PC-9 (cell line): ENCODE measurements at regions of chr2 and their contacts with region 1.

Region 1: DNA sequence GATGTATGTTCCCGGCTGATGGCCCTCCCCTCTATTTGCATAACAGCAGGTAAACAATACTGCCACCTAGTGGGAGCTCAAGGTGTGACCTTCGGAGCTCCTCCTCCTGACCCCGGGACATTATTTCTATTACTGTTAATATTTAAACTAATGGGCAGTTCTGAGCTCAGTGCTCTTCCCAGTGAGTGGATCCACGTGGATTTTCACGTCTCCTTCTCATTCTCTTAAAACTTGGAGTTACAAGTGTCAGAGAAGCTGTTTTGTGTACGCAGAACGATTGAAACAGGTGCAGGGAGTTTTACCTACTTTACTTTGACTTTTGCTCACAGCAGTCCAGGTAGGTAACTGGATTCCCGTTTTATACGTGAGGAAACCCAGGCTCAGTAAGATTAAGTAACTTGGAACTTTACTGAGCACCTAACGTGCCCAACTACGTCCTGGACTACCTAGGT is 127.3 kb downstream of the PRKCE start:
- DNase-seq: peak; percentile 67 to 68
- H3K4me3 ChIP-seq: no peak overlapping the region
- H3K27ac ChIP-seq: no peak overlapping the region
- H3K4me1 ChIP-seq: no peaks in the 10 kb centered on the region
- H3K27me3 ChIP-seq: no peaks in the 10 kb centered on the region
- CTCF ChIP-seq: peak; percentile 97

Region 2: DNA sequence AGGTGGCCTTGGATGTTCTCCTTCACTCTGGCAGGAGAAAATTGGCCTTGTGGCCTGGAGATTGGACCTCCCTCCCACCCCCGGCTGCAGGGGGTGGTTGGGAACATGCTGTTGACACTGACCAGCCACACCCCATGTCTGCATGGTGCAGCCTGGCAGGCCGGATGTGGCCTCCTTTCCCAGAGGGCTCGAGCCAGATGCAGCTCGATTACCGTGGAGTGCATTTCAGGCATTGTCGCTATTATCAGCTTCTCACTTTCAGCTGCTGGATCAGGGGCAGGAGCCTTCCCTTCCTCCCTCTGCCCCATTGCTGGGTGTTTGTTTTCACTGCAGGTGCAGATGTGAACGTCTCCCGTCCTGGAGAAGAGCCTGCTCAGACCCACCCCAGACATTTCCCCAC is 558.5 kb before region 1 on chr2:
- CTCF ChIA-PET with region 1: no interaction called
- POLR2A ChIA-PET with region 1: no interaction called
- intact Hi-C with region 1: no loop called
- DNase-seq: peak; percentile 24 to 47
- H3K4me3 ChIP-seq: no peak overlapping the region
- H3K27ac ChIP-seq: no peak overlapping the region
- H3K4me1 ChIP-seq: peaks cover 30% of the 10 kb centered on the region
- H3K27me3 ChIP-seq: no peaks in the 10 kb centered on the region
- CTCF ChIP-seq: no peak

Region 3: GRCh38 chr2:45643543-45644542 is 134.9 kb before region 1 on chr2:
- CTCF ChIA-PET with region 1: interaction called, 3 read pairs
- POLR2A ChIA-PET with region 1: no interaction called
- intact Hi-C with region 1: loop called (anchors 1 kb)
- DNase-seq: peak in 1 of 2 experiments; percentile 72
- H3K4me3 ChIP-seq: peak overlapping the region; percentile 61
- H3K27ac ChIP-seq: no peak overlapping the region
- H3K4me1 ChIP-seq: peaks cover 9% of the 10 kb centered on the region; the same call in 1 of the 2 replicates
- H3K27me3 ChIP-seq: no peaks in the 10 kb centered on the region
- CTCF ChIP-seq: peak; percentile 99

Region 4: DNA sequence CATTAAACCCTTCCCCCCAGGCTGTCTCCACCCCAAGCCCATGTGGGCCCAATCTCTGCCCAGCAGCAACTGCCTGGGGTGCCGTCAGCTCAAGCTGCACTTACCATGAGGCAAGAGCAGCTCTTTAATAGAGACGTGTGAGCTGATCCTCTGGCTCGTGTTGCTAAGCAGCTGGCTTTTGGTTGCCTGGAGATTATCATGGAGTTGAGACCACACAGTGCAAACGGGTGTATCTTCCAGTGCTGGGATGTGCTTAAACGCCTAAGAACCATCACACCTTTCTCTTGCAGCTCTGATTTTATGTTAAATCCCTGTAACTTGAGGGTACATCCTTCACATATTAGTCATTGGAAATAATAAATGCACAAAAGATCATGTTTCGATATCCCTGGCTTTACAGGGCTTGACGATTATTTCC is 143.8 kb after region 1 on chr2:
- CTCF ChIA-PET with region 1: no interaction called
- POLR2A ChIA-PET with region 1: no interaction called
- intact Hi-C with region 1: no loop called
- DNase-seq: peak; percentile 33 to 61
- H3K4me3 ChIP-seq: no peak overlapping the region
- H3K27ac ChIP-seq: no peak overlapping the region
- H3K4me1 ChIP-seq: peaks cover 23% of the 10 kb centered on the region
- H3K27me3 ChIP-seq: no peaks in the 10 kb centered on the region
- CTCF ChIP-seq: no peak